ENCODE measurements at regions of chr5 and their contacts with region 1.

Region 1: GRCh38 chr5:168328814-168329213 is 37.4 kb downstream of the WWC1 start:
- DNase-seq: no peak
- H3K4me3 ChIP-seq: no peak overlapping the region
- H3K27ac ChIP-seq: no peak overlapping the region
- H3K4me1 ChIP-seq: peaks cover 31% of the 10 kb centered on the region
- H3K27me3 ChIP-seq: no peaks in the 10 kb centered on the region
- CTCF ChIP-seq: no peak

Region 2: GRCh38 chr5:167770461-167770860 is 558.4 kb before region 1 on chr5:
- CTCF ChIA-PET with region 1: no interaction called
- dilution Hi-C with region 1: no loop called
- in situ Hi-C with region 1: no loop called
- intact Hi-C with region 1: no loop called
- DNase-seq: no peak
- H3K4me3 ChIP-seq: no peak overlapping the region
- H3K27ac ChIP-seq: no peak overlapping the region
- H3K4me1 ChIP-seq: peaks cover 3% of the 10 kb centered on the region
- H3K27me3 ChIP-seq: no peaks in the 10 kb centered on the region
- CTCF ChIP-seq: no peak

Region 3: DNA sequence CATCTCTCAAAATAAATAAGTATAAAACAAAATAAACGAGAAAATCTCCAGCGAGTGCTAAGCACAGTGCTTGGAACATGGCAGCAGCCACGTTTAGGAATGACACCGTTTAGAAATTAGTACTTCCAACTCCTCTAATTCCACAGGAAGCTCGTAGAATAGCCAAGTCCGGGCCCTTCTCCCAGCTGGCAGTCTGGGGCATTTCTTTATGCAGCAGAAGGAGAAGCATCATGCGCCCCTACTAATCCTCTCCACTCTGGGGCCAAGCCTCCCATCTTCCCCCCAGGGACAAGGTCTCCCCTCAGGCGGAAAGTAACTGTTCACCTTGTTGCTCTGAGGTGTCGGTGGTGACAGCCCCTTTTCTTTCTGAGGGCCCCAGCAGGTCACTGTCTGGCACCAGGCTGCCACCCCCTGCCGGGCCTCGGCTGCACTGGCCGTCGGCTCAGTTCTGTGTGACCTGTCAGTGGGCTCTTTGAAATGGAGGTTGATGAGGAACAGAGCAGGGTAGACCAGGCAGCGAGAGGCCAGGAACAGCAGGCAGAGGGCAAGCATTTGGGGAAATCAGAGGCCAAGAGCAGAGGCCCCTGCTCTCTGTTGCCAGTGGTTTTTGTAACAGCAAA is 150.9 kb before region 1 on chr5:
- CTCF ChIA-PET with region 1: no interaction called
- dilution Hi-C with region 1: no loop called
- in situ Hi-C with region 1: no loop called
- intact Hi-C with region 1: no loop called
- DNase-seq: no peak
- H3K4me3 ChIP-seq: no peak overlapping the region
- H3K27ac ChIP-seq: no peak overlapping the region
- H3K4me1 ChIP-seq: no peaks in the 10 kb centered on the region
- H3K27me3 ChIP-seq: no peaks in the 10 kb centered on the region
- CTCF ChIP-seq: no peak

Region 4: DNA sequence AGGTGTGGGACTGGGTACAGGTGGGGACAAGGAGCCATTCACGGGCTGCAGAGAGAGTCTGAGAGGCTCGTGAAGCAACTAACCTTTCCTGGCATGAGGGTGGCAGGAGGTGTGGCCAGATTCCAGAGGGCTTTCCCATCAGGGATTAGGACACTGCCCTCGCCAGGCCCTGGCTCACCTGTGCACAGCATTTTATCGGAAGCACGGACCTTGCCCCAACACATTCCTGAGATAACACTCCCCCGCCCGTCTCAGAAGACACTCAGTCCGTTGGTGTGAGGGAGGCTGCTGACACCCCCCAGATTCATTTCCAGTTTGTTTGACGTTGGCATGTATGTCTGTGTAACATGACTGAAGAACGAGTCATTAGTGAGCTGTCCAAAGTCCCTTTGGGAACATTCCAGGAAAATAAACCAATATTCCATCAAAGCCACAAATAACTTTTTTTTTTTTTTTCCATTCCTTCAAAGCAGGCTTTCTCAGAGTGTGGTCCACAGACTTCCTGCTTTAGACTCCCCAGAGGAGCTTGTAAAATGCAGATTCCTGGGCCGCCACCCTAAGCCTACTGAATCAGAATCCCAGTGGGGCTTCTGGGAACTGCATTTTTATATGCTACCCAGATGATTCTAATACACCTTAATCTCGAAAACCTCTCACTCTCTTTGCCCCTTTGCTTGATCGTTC is 13.9 kb before region 1 on chr5:
- CTCF ChIA-PET with region 1: no interaction called
- dilution Hi-C with region 1: no loop called
- in situ Hi-C with region 1: no loop called
- intact Hi-C with region 1: loop called (anchors 1 kb)
- DNase-seq: peak; percentile 93
- H3K4me3 ChIP-seq: peak overlapping the region in 1 of 3 experiments; percentile 1
- H3K27ac ChIP-seq: peak overlapping the region; percentile 61
- H3K4me1 ChIP-seq: peaks cover 36% of the 10 kb centered on the region
- H3K27me3 ChIP-seq: no peaks in the 10 kb centered on the region
- CTCF ChIP-seq: peak; percentile 11 to 37

Region 5: GRCh38 chr5:168346441-168346840 is 17.6 kb after region 1 on chr5:
- CTCF ChIA-PET with region 1: no interaction called
- dilution Hi-C with region 1: no loop called
- in situ Hi-C with region 1: no loop called
- intact Hi-C with region 1: loop called (anchors 2 kb)
- DNase-seq: peak; percentile 81
- H3K4me3 ChIP-seq: no peak overlapping the region
- H3K27ac ChIP-seq: no peak overlapping the region
- H3K4me1 ChIP-seq: peaks cover 31% of the 10 kb centered on the region
- H3K27me3 ChIP-seq: no peaks in the 10 kb centered on the region
- CTCF ChIP-seq: no peak

Measured in mammary epithelial cell (primary cell).